Activated naive CD8-positive, alpha-beta T cell treated with anti-CD3 and anti-CD28 coated beads, Interleukin-2, amount 10 ng/mL, durations not matched to agents 7 days and 5 days (primary cell): ENCODE measurements at regions of chr16 and their contacts with region 1.

Region 1: GRCh38 chr16:66406534-66407221 is 20.4 kb upstream of the BEAN1 start:
- DNase-seq: peak; percentile 89
- ATAC-seq: peak; percentile 87
- H3K4me3 Mint-ChIP-seq: peak overlapping the region; percentile 88
- H3K27ac Mint-ChIP-seq: peak overlapping the region; percentile 73
- H3K4me1 Mint-ChIP-seq: peaks cover 18% of the 10 kb centered on the region
- H3K27me3 Mint-ChIP-seq: peaks cover 16% of the 10 kb centered on the region

Region 2: DNA sequence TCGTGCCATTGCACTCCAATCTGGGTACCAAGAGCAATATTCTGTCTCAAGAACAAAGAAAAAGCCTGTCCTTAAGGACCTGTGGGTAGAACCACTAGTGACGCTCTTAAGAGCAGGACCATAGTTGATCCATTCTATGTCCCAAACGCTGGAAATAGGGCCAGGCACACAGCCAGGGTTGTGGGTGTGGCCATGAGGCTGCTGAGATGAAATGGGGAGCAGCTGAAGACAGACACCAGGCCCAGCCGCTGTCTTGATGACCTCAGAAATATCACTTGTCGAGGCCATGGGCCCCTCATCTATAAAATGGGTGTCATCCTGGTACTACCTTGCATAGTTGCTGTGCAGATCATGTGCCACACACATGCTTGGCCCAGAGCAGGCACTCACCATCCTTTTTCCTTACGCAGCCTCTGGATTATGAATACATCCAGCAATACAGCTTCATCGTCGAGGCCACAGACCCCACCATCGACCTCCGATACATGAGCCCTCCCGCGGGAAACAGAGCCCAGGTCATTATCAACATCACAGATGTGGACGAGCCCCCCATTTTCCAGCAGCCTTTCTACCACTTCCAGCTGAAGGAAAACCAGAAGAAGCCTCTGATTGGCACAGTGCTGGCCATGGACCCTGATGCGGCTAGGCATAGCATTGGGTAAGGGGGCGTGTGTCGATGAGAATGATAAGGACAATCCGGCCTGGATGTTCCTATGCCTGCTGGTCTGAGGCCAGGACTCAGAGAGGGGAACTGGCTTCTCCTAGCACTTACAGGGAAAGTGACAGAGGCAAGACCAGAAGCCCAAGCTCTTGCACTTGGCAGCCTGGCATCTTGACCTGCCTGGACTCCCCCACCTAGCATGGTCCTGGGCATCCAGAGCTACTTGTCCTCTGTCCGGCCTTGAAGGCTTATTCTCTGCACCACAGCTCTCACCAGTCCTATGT is 14.7 kb before region 1 on chr16:
- POLR2A ChIA-PET with region 1: no interaction called
- DNase-seq: no peak
- ATAC-seq: no peak
- H3K4me3 Mint-ChIP-seq: no peak overlapping the region
- H3K27ac Mint-ChIP-seq: no peak overlapping the region
- H3K4me1 Mint-ChIP-seq: no peaks in the 10 kb centered on the region
- H3K27me3 Mint-ChIP-seq: peaks cover 17% of the 10 kb centered on the region

Region 3: GRCh38 chr16:66588981-66589713 is 182.5 kb after region 1 on chr16:
- POLR2A ChIA-PET with region 1: interaction called, 15 read pairs
- DNase-seq: peak; percentile 74
- ATAC-seq: peak; percentile 98
- H3K4me3 Mint-ChIP-seq: peak overlapping the region; percentile 82
- H3K27ac Mint-ChIP-seq: peak overlapping the region; percentile 77
- H3K4me1 Mint-ChIP-seq: peaks cover 46% of the 10 kb centered on the region
- H3K27me3 Mint-ChIP-seq: no peaks in the 10 kb centered on the region